ENCODE measurements at regions of chr19 and their contacts with region 1.

Region 1: DNA sequence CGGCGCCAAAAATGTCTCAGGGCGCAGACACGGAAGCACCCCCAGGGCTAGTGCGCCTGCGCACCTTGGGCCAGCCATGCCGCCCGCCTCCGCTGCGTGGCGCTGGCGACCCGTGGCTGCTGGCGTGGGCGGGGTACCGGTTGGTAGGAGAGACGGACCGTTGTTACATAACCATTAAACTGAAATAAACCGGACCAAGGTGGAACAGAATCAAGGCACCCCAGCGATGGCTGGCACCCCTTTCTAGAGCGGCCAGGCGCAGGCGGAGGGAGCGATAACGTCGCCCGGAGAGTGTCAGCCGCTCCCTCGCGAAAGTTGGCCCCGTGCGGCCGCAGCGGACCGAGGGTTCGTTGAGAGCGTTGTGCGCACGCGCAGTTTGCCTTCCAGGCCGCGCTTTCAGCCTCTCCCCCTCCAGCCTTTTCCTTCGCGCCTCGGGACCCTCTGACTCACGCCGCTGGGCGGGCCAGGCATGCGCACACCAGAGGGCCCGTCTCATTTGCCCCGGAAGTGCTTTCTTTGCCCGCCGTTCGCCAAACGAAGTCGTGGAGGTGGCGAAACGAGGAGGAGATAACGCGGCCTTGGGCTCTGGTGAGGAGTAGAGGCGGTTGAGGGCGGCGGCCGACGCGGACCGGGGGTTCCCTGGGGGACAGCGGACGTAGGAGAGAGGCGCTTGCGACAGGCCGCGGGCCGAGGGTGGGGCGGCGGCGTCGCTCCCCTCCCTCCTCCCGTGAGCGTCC is at the starts of genes PLEKHJ1 and SF3A2:
- DNase-seq: peak; percentile 89
- H3K4me3 ChIP-seq: peak within 1 kb of the TSS; percentile 70
- CTCF ChIP-seq: peak; percentile 98

Region 2: DNA sequence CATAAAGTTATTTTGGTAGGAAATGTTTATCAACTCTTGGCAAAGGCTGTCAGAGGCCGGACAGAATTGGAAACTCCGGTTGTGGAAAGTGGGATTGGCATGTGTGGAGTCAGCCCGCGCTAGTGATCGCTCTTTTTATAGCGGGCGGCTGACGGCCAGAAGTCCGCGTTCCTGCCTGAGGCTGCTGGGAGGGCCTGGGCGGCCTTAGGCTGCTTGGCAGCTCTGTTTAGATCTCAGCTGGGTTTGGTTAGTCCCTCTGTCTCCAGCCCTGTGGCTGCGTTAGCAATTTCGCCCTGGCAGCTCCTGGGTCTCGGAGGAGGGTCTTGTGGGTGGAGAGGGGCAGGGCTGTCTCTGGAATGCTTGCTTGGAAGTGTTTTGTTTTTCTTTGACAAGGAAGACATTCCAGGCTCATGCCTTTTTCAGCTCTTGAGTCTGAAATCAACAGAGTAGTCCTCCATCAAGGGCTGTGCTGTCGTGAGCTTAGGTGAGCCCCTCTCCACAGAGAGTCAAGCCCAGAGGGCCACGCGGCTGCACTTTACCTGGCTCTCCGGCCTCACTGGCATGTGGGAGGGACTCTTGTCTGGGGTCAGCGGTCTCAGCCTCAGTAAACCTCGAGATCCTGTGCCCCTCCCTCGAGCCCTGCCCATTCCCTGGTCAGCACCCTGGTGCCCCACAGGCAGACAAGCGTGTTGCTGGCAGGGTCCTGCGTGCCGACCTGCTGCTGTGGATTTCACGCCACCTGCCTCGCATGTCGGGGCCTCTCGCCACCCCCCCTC is 50.2 kb before region 1 on chr19:
- in situ Hi-C with region 1: loop called (anchors 5 kb)
- DNase-seq: peak; percentile 91
- H3K4me3 ChIP-seq: no peak overlapping the region
- CTCF ChIP-seq: no peak

Region 3: GRCh38 chr19:2282062-2282861 is 45.8 kb after region 1 on chr19 and contains the start of gene PEAK3:
- in situ Hi-C with region 1: no loop called
- DNase-seq: no peak
- H3K4me3 ChIP-seq: peak within 1 kb of the TSS; percentile 18
- CTCF ChIP-seq: no peak

Region 4: GRCh38 chr19:2328401-2329148 is 92.1 kb after region 1 on chr19 and contains the starts of genes LSM7 and SPPL2B:
- in situ Hi-C with region 1: loop called (anchors 5 kb)
- DNase-seq: peak; percentile 49
- H3K4me3 ChIP-seq: peak within 1 kb of the TSS; percentile 91
- CTCF ChIP-seq: no peak

Measured in astrocyte of the cerebellum (primary cell).